ENCODE measurements at regions of chr4 and their contacts with region 1.

Region 1: GRCh38 chr4:44629280-44629866 is 22.1 kb downstream of the YIPF7 start:
- DNase-seq: peak; percentile 63
- H3K4me3 Mint-ChIP-seq: no peak overlapping the region
- H3K27ac Mint-ChIP-seq: no peak overlapping the region
- H3K4me1 Mint-ChIP-seq: peaks cover 2% of the 10 kb centered on the region
- H3K27me3 Mint-ChIP-seq: peaks cover 2% of the 10 kb centered on the region

Region 2: GRCh38 chr4:42995343-42995944 is 1633.9 kb before region 1 on chr4:
- CTCF ChIA-PET with region 1: no interaction called
- intact Hi-C with region 1: loop called (anchors 1 kb)
- DNase-seq: no peak
- H3K4me3 Mint-ChIP-seq: no peak overlapping the region
- H3K27ac Mint-ChIP-seq: no peak overlapping the region
- H3K4me1 Mint-ChIP-seq: no peaks in the 10 kb centered on the region
- H3K27me3 Mint-ChIP-seq: no peaks in the 10 kb centered on the region

Region 3: DNA sequence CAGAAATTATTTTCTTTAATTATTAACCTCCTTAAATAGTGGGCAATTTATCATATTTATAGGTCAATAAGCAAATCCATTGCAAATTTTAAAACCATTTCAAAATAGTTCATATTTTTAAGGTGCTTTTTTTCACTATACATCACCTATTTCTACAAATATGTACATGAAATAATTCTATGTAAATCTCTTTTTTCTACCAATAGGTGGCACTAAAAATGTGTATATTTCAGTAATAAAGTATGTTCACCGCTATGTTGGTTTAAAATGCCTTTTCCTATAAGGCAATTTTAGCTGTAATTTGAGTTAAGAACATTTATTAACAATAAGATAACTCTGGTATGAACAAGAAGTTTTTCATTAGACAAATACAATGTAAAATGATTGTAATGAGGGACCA is 853.0 kb before region 1 on chr4:
- CTCF ChIA-PET with region 1: no interaction called
- intact Hi-C with region 1: loop called (anchors 1 kb)
- DNase-seq: no peak
- H3K4me3 Mint-ChIP-seq: no peak overlapping the region
- H3K27ac Mint-ChIP-seq: no peak overlapping the region
- H3K4me1 Mint-ChIP-seq: no peaks in the 10 kb centered on the region
- H3K27me3 Mint-ChIP-seq: no peaks in the 10 kb centered on the region

Region 4: DNA sequence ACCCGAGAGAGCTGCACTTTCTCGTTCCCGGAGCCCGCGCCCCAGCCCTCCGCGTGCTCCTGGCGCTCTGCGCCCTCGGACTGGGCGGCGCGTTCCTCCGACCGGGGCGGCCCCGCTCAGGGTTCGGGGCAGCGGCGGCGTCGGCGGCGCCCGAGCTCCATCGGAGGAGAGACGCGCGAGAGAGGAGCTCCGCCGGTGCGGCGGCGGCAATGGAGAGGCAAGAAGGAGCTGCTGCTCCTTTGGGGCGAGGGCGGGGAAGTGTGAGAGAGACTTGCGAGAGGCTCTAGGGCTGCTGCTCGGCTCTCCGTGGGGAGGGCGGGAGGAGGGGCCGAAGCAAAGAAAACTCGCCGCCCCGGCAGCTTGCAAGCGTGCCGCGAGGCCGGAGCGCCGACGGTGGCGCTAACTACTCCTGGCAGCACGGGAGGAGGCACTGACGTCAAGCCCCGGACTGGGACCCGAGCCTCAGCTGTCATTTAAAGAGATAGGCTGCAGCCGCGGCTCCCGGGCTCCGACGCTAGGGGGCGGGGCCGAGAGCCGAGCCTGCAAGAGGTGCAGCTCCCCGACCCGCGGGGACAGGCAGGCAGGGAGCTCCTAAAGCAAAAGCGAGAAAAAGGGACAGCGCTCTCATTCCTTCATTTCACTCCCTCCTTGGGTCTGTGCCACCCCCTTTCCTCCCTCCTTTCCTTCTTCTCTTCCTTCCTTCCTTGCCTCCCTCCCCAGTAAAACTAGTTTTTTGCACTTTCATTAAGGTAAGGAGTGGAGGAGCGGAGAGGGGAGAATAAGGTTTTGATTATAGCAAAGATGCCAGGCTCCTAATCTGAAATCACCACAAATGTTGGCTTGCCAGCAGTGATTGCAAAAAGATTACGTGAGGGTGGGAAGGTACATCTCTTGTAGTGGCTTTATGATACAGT is 180.6 kb before region 1 on chr4 and contains the start of gene KCTD8:
- CTCF ChIA-PET with region 1: interaction called, 3 read pairs
- intact Hi-C with region 1: loop called (anchors 1 kb)
- DNase-seq: peak; percentile 74
- H3K4me3 Mint-ChIP-seq: peak within 1 kb of the TSS; percentile 62
- H3K27ac Mint-ChIP-seq: no peak within 1 kb of the TSS
- H3K4me1 Mint-ChIP-seq: peaks cover 17% of the 10 kb centered on the region
- H3K27me3 Mint-ChIP-seq: peaks cover 54% of the 10 kb centered on the region
- total RNA-seq, gene KCTD8: not detected

Region 5: DNA sequence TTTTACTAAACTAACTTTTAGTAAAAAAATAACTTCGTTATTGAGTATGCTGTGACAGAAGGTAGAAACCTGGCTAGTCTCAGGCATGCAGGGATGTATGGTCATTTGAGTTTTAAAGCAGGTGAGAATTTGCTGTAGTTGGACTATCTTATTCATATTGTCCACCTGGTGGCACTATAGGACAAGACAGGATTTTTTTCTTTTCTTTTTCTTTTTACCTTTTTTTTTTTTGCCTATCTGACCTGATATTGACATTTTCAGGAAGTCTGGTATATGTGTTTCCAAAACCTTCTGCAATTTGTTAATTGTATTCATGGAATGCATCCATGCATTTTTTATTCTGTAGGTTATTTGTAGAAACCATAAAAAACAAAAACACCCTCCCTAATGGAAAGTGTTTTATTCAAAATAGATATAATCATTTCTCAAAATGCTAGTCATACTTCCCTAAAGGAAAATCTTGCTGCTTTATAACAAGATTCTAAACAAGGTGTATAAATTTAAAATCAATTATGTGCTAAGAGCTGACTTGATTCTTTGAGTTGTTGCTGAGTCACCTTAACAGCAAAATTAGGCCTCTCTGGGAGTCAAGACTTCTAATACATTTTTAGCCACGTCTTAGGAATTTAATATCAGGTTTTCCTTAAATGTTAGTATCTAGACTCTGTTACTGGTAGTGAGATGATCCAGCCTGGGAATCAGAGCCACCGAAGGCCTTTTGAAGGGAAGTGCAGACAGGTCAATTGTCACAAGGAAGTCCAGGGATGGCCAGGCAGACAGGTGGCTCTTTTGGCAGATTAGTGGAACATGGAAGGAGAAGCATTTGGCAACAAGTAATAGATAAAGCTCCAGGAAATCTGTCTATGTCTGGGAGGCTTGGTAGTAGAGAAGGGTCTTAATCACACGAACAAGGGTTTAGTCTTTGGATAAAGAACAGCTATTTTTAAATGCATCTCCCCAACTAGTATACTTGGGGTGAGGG is 298.3 kb after region 1 on chr4:
- CTCF ChIA-PET with region 1: no interaction called
- intact Hi-C with region 1: no loop called
- DNase-seq: no peak
- H3K4me3 Mint-ChIP-seq: no peak overlapping the region
- H3K27ac Mint-ChIP-seq: no peak overlapping the region
- H3K4me1 Mint-ChIP-seq: no peaks in the 10 kb centered on the region
- H3K27me3 Mint-ChIP-seq: no peaks in the 10 kb centered on the region

Measured in activated naive CD4-positive, alpha-beta T cell treated with anti-CD3 and anti-CD28 coated beads for 36 hours (primary cell).